ENCODE measurements at regions of chr3 and their contacts with region 1.

Region 1: DNA sequence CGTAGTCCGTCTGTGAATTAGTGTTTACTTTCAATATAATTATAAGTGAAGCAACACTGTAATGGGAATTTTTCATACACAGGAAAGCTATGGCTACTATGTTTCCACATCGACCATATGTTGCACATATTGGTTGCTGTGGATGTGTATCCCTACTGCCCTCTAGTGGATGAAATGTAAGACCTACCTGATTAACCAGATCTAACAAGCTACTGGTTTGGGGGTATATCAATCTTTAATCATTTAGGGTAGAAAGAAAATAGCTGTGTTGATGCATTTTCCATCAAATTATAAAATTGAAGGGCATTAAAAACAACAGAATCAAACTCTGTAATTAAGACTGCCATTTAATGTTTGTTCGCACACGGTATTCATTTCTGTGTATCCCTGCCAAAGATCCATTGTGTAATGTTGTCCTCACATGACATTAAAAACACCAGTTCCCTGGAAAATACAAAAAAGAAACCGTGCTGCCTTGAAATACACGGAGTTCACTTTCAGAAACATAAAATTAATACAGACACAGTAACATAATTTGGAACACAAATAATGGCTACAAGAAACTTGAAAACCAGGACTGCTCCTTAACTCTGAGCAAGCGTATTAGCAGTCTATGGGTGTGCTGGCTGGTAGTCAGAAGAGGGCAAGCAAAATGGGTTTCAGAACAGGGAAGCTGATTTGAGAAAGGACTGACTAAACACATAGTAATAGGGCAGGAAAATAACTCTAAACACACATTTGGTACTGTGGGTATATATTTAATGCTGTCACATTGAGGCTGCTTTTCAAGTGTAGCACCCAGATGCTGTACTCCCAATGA is 125.1 kb downstream of the TIGIT start:
- DNase-seq: peak; percentile 76
- H3K4me3 ChIP-seq: peak overlapping the region in 1 of 3 experiments; percentile 8
- H3K27ac ChIP-seq: peak overlapping the region; percentile 58
- H3K4me1 ChIP-seq: peaks cover 10% of the 10 kb centered on the region
- H3K27me3 ChIP-seq: no peaks in the 10 kb centered on the region
- CTCF ChIP-seq: peak; percentile 69 to 78

Region 2: GRCh38 chr3:114362815-114363214 is 56.1 kb before region 1 on chr3:
- CTCF ChIA-PET with region 1: no interaction called
- dilution Hi-C with region 1: no loop called
- in situ Hi-C with region 1: no loop called
- intact Hi-C with region 1: loop called (anchors 1 kb)
- DNase-seq: peak; percentile 21
- H3K4me3 ChIP-seq: no peak overlapping the region
- H3K27ac ChIP-seq: no peak overlapping the region
- H3K4me1 ChIP-seq: peaks cover 6% of the 10 kb centered on the region
- H3K27me3 ChIP-seq: no peaks in the 10 kb centered on the region
- CTCF ChIP-seq: peak; percentile 40 to 47

Region 3: GRCh38 chr3:114480442-114480841 is 61.5 kb after region 1 on chr3:
- CTCF ChIA-PET with region 1: no interaction called
- dilution Hi-C with region 1: no loop called
- in situ Hi-C with region 1: no loop called
- intact Hi-C with region 1: no loop called
- DNase-seq: no peak
- H3K4me3 ChIP-seq: no peak overlapping the region
- H3K27ac ChIP-seq: no peak overlapping the region
- H3K4me1 ChIP-seq: no peaks in the 10 kb centered on the region
- H3K27me3 ChIP-seq: no peaks in the 10 kb centered on the region
- CTCF ChIP-seq: no peak

Region 4: GRCh38 chr3:114518206-114518808 is 99.4 kb after region 1 on chr3:
- CTCF ChIA-PET with region 1: no interaction called
- dilution Hi-C with region 1: no loop called
- in situ Hi-C with region 1: no loop called
- intact Hi-C with region 1: no loop called
- DNase-seq: no peak
- H3K4me3 ChIP-seq: no peak overlapping the region
- H3K27ac ChIP-seq: no peak overlapping the region
- H3K4me1 ChIP-seq: no peaks in the 10 kb centered on the region
- H3K27me3 ChIP-seq: no peaks in the 10 kb centered on the region
- CTCF ChIP-seq: no peak

Region 5: DNA sequence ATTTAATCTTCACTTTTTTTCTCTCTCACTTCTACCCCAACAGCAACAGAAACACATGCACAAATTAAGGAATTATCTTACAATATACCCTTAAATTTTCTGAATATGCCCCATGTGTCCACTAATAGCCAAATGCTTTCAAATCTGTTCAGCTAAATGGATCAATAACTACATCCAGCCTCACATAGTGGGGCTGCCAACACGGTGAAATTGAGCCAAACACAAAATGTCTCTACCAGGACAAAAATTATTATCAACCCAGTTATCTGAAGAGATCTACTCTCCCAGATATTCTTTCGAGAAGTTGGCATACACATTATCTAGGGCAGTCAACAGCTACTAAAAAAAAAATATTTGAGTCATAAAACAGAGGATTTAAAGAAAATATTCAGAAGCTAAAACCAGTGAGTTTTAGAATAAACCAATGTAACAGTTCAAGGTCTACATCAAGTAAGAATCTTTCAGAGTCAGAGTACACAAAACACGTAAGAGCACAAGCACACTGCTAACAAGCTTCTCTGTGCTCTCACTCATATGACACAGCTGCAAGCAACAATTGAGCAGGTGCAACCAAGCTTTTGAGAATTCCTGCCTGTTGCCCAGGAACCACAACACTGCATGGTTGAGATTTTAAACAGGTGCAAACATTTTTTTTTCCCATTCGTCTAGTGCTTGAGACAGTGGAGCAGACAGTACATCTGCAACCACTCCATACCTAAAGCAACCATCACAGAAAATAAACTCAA is 480.4 kb after region 1 on chr3:
- CTCF ChIA-PET with region 1: no interaction called
- dilution Hi-C with region 1: no loop called
- in situ Hi-C with region 1: no loop called
- intact Hi-C with region 1: loop called (anchors 5 kb)
- DNase-seq: peak; percentile 2
- H3K4me3 ChIP-seq: no peak overlapping the region
- H3K27ac ChIP-seq: no peak overlapping the region
- H3K4me1 ChIP-seq: no peaks in the 10 kb centered on the region
- H3K27me3 ChIP-seq: no peaks in the 10 kb centered on the region
- CTCF ChIP-seq: no peak